B cell (primary cell): ENCODE measurements at regions of chr1 and their contacts with region 1.

Region 1: GRCh38 chr1:153670859-153671627 is at the start of gene ILF2:
- DNase-seq: peak; percentile 99
- ATAC-seq: peak; percentile 90
- H3K4me3 ChIP-seq: peak within 1 kb of the TSS; percentile 74 to 99 (median 94)
- H3K4me3 Mint-ChIP-seq: no peak within 1 kb of the TSS
- H3K27ac ChIP-seq: peak within 1 kb of the TSS; percentile 86 to 95
- H3K27ac Mint-ChIP-seq: no peak within 1 kb of the TSS
- H3K4me1 ChIP-seq: peaks cover 10 to 18% of the 10 kb centered on the region in 2 donors
- H3K4me1 Mint-ChIP-seq: peaks cover 18% of the 10 kb centered on the region
- H3K27me3 ChIP-seq: no peaks in the 10 kb centered on the region
- H3K27me3 Mint-ChIP-seq: peaks cover under 1% of the 10 kb centered on the region
- CTCF ChIP-seq: peak; percentile 26
- total RNA-seq, gene ILF2: 86.5 and 89.8 TPM in 2 replicates

Region 2: DNA sequence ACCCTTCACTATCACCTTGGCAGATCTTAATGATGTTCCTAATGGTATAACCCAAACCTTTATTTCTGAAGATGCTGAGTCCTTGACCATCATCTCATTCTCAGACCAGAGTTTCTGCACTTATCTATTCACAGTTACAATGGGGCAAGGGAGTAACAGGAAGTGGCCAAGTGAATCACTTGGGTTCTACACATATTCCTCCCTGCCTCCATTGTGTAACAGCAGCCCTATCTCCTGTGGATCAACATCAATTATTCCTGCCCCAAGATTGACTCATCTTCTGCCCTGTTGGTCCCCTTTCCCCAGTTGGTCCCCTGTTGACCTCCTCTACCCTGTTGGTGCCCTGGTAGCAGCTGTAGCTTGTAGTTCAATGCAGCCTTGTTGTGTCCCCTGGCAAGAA is 200.3 kb before region 1 on chr1:
- CTCF ChIA-PET with region 1: no interaction called
- POLR2A ChIA-PET with region 1: no interaction called
- intact Hi-C with region 1: no loop called
- DNase-seq: no peak
- ATAC-seq: no peak
- H3K4me3 ChIP-seq: no peak overlapping the region
- H3K4me3 Mint-ChIP-seq: no peak overlapping the region
- H3K27ac ChIP-seq: no peak overlapping the region
- H3K27ac Mint-ChIP-seq: no peak overlapping the region
- H3K4me1 ChIP-seq: peaks cover 0 to 4% of the 10 kb centered on the region in 2 donors
- H3K4me1 Mint-ChIP-seq: no peaks in the 10 kb centered on the region
- H3K27me3 ChIP-seq: peaks cover 0 to 25% (median 5%) of the 10 kb centered on the region in 4 experiments
- H3K27me3 Mint-ChIP-seq: peaks cover 48% of the 10 kb centered on the region
- CTCF ChIP-seq: no peak

Region 3: DNA sequence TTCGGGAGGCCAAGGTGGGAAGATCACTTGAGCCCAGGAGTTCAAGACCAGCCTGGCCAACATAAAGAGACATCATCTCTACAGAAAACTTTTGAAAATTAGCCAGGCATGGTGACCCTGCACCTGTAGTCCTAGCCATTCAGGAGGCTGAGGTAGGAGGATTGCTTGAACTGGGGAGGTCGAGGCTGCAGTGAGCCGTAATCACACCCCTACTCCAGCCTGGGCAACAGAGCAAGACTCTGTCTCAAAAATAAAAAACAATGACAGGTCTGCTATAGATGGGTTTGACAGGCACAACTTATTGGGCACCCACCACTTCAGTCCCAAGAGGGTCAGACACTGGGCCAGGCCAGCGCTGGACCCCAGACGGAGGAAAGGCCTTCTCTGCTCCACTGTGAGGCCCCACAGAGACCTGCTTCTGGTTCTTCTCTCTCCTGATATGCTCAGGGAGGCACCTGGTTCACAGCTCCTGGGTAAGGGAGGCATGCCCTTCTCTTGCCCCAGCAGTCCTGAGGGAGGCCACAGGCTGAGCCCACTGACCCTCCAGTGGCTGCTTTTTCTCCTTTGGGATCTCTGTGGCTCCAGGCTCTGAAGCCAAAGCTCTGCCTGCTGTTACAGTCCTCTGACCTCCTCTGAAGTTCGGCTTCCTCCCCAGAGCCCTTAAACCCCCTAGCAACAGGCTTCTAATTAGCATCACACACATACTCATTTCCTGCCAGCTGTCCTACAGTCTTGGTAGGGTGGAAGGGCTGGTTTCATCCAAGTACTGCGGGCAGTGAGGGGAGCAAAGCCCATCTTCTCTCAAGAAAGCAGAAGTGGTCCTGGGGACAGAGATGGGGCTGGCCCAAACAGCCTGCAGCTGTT is 72.5 kb before region 1 on chr1:
- CTCF ChIA-PET with region 1: no interaction called
- POLR2A ChIA-PET with region 1: interaction called, 5 read pairs
- intact Hi-C with region 1: loop called (anchors 1 kb)
- DNase-seq: peak; percentile 91
- ATAC-seq: peak; percentile 95
- H3K4me3 ChIP-seq: peak overlapping the region in 1 of 5 experiments; percentile 15
- H3K4me3 Mint-ChIP-seq: peak overlapping the region; percentile 68
- H3K27ac ChIP-seq: peak overlapping the region; percentile 94 to 97
- H3K27ac Mint-ChIP-seq: peak overlapping the region; percentile 96
- H3K4me1 ChIP-seq: peaks cover 27 to 39% of the 10 kb centered on the region in 2 donors
- H3K4me1 Mint-ChIP-seq: peaks cover 39% of the 10 kb centered on the region
- H3K27me3 ChIP-seq: no peaks in the 10 kb centered on the region
- H3K27me3 Mint-ChIP-seq: no peaks in the 10 kb centered on the region
- CTCF ChIP-seq: no peak

Region 4: GRCh38 chr1:153658400-153659174 is 12.5 kb before region 1 on chr1 and contains the start of gene SNAPIN:
- CTCF ChIA-PET with region 1: interaction called, 3 read pairs
- POLR2A ChIA-PET with region 1: interaction called, 6 read pairs
- intact Hi-C with region 1: loop called (anchors 1 kb)
- DNase-seq: peak; percentile 93
- ATAC-seq: peak; percentile 99
- H3K4me3 ChIP-seq: peak within 1 kb of the TSS; percentile 77 to 87 (median 82)
- H3K4me3 Mint-ChIP-seq: peak within 1 kb of the TSS; percentile 96
- H3K27ac ChIP-seq: peak within 1 kb of the TSS; percentile 68 to 83
- H3K27ac Mint-ChIP-seq: peak within 1 kb of the TSS; percentile 91
- H3K4me1 ChIP-seq: peaks cover 5 to 15% of the 10 kb centered on the region in 2 donors
- H3K4me1 Mint-ChIP-seq: peaks cover 12% of the 10 kb centered on the region
- H3K27me3 ChIP-seq: no peaks in the 10 kb centered on the region
- H3K27me3 Mint-ChIP-seq: no peaks in the 10 kb centered on the region
- CTCF ChIP-seq: no peak
- total RNA-seq, gene SNAPIN: 37.6 and 39.4 TPM in 2 replicates

Region 5: DNA sequence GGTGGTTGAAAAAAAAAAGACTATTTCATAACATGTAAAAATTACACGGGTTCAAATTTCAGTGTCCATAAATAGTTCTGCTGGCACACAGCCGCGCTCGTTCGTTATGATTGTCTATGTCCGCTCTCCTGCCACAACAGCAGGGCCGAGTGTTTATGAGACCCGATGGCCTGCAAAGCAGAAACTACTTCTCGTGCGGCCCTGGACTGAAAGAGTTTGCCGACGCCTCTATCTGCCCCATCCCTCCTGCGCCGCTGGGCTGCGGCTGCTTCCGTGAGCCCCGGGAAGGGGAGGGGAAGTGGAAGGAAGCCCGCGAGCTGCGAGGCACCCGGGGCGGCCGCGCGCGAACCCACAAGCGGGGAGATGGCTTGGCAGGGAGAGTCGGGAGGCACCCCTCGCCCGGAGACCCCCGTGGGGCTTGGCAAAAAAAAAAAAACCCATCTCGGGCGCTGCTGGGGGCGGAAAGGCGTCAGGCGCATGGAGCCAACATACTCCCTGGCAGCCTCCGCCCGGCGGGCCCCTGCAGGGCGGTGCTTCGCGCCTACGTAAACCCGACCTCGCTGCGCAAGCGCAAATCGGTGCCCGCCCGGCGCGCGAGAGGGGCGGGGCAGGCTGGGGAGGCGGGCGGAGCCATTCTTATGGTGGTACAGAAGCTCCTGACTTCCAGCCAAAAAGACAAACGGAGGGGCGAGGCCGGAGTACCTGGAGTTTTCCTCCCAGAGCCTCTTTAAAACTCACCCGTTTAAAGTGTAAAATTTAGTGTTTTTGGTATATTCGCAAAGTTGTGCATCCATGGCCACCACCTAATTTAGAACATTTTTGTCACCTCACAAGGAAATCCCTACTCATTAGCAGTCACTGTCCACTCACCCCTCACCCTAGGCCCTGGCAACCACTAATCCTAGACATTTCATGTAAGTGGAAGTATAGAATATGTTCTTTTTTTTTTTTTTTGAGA is 112.5 kb after region 1 on chr1:
- CTCF ChIA-PET with region 1: no interaction called
- POLR2A ChIA-PET with region 1: interaction called, 3 read pairs
- intact Hi-C with region 1: loop called (anchors 1 kb)
- DNase-seq: peak; percentile 95
- ATAC-seq: peak; percentile 97
- H3K4me3 ChIP-seq: peak overlapping the region; percentile 44 to 89 (median 76)
- H3K4me3 Mint-ChIP-seq: peak overlapping the region; percentile 97
- H3K27ac ChIP-seq: peak overlapping the region; percentile 94 to 95
- H3K27ac Mint-ChIP-seq: peak overlapping the region; percentile 93
- H3K4me1 ChIP-seq: peaks cover 7 to 23% of the 10 kb centered on the region in 2 donors
- H3K4me1 Mint-ChIP-seq: peaks cover 18% of the 10 kb centered on the region
- H3K27me3 ChIP-seq: no peaks in the 10 kb centered on the region
- H3K27me3 Mint-ChIP-seq: no peaks in the 10 kb centered on the region
- CTCF ChIP-seq: no peak